Dorsolateral prefrontal cortex (tissue), 120 donors: ENCODE measurements at regions of chr16 and their contacts with region 1.

Region 1: DNA sequence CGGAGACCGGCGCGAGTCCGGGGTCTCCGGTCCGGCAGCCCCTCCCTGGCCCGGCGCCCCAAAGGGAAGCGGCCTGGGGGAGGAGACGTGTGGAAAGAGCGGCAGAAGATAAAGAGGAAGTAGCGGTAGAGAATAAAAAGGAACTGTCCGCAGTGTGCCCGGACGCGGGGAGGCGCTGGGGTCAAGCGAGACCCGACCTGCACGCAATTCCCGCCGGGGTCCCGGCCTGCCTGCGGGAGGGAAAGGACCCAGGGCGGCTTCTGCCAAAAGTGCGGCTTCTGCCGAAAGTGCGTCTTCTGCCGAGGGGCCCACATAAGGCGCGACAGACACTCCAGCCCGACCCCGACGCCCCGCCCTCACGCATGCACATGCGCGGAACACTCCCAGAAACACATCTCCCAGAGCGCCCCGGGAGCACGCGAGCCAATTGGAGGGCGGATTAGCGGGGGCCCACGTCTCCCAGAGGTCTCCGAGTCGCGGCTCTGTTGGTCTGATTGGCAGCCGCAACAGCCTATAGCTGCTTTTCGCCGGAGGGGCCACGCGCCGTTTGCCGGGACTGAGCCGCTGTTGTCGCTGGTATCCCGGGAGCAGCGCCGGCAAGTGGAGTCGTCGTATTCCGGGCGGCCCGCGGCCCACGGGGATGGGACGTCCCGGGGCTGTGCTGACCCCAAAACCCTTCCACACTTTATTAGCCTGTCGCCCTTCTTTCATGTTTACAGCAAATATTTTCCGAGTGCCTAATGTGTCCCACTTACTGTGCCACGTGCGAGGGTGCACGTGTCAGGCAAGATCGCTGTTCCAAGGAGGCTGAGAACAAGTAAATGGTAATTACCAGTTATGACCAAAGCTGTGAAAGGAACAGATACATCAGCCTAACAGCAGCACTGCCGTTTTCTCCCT is 8.0 kb upstream of the MEFV start:
- DNase-seq: peak; percentile 97 to 99 (median 99)
- H3K4me3 ChIP-seq: peak overlapping the region; percentile 57 to 97 (median 88)
- H3K27ac ChIP-seq: peak overlapping the region; percentile 79 to 99 (median 95)
- H3K27me3 ChIP-seq: no peaks in the 10 kb centered on the region
- CTCF ChIP-seq: peak in 49 of 56 donors; percentile 1 to 69 (median 40)

Region 2: DNA sequence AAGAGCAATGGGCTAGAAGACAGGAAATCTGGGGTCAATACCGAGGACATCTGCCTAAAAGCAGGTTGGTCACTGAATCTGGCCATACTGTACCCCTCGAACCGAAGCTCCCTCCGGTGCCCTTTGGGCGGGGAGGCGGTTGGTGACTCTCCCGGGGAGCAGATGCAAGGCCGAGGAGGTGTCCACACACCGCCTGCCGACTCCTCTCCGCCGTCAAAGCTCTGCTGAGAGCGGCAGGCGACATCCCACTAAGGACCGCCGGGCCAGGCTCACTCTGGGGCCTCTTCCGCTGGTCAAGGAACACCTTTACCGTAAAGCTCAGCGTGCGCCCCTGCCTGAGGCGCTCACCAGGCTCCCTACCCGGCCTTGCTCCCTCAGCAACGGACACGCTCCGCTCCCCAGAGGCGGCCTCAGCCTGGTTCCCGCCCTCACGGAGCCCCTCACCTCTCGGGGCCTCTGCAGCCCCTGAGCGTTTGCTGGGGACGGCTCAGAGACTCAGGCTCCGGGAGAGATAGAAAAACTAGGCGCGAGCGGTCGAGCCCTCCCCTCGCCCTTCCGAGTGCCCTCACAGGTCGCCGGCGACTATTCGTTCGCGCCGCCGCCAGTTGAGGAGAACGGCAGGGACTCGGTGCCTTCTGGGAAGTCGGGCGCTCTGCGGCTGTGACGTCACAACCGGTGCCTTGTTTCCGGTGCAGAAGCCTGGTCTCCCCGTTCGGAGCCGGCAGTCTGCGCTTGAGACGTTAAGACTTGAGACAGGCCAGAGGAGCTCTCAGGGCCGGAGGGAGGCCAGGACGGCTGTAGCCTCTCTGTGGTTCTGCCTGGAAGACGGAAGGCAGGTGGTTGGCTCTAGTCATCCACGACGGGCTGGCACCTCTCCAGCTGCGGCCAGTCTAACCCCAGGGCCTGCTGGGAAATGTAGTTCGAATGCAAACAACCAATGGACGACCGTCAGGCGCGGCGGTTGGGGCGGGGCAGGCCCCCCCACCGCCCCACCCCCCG is 29.5 kb before region 1 on chr16 and contains the start of gene ZNF200:
- intact Hi-C with region 1: loop called (anchors 1 kb)
- DNase-seq: peak; percentile 95 to 97 (median 95)
- H3K4me3 ChIP-seq: peak within 1 kb of the TSS; percentile 66 to 100 (median 93)
- H3K27ac ChIP-seq: peak within 1 kb of the TSS; percentile 88 to 100 (median 98)
- H3K27me3 ChIP-seq: no peaks in the 10 kb centered on the region
- CTCF ChIP-seq: peak in 24 of 56 donors; percentile 11 to 51 (median 28)
- total RNA-seq, gene ZNF200: 3.7 to 13.3 (median 8.7) TPM

Region 3: GRCh38 chr16:3282730-3283524 is 18.5 kb after region 1 on chr16 and contains the start of gene ZNF263:
- intact Hi-C with region 1: loop called (anchors 1 kb)
- DNase-seq: peak; percentile 90 to 98 (median 96)
- H3K4me3 ChIP-seq: peak within 1 kb of the TSS; percentile 64 to 100 (median 98)
- H3K27ac ChIP-seq: peak within 1 kb of the TSS; percentile 91 to 100 (median 99)
- H3K27me3 ChIP-seq: peaks cover 0 to 2% (median 0%) of the 10 kb centered on the region in 45 donors
- CTCF ChIP-seq: peak in 26 of 56 donors; percentile 5 to 32 (median 18)
- total RNA-seq, gene ZNF263: 20.2 to 37.2 (median 28.3) TPM

Region 4: GRCh38 chr16:3295783-3296182 is 31.4 kb after region 1 on chr16:
- intact Hi-C with region 1: no loop called
- DNase-seq: no peak
- H3K4me3 ChIP-seq: peak overlapping the region in 4 of 59 donors; percentile 3 to 41 (median 25)
- H3K27ac ChIP-seq: peak overlapping the region in 6 of 59 donors; percentile 1 to 55 (median 36)
- H3K27me3 ChIP-seq: no peaks in the 10 kb centered on the region
- CTCF ChIP-seq: peak in 8 of 56 donors; percentile 12 to 36 (median 22)

Region 5: DNA sequence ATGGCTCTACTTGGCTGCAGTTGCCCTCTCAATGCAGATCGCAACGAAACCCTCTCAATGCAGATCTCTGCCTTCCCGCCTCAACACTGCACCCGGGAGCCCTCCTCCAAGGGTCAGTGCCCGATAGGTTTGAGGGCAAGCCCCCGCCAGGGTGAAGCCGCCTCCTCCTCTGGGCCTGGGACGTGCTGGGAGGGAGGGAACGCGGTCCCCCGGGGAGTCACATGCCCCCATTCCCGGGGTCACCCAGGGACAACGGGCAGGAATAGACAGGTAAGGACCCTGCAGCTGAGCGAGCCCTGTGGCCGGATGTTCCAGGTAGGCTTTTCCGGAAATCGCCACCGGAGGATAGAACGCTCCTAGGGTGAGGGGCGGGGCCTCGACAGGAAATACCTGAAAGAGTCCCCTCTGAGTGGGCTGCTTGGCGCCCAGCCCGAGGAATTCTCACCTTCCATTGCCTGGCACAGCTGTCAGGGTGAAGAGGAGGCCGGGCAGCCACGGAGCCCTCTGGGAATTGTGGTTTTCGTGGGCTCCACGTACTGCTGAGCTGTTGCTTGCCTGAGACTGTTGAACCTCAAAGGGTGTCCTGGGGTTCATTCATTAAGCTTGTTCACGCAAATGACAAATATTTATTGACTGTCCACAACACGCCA is 149.5 kb after region 1 on chr16:
- intact Hi-C with region 1: no loop called
- DNase-seq: no peak
- H3K4me3 ChIP-seq: no peak overlapping the region
- H3K27ac ChIP-seq: no peak overlapping the region
- H3K27me3 ChIP-seq: no peaks in the 10 kb centered on the region
- CTCF ChIP-seq: no peak

Region 6: GRCh38 chr16:3457434-3458252 is 193.3 kb after region 1 on chr16:
- intact Hi-C with region 1: loop called (anchors 2 to 5 kb)
- DNase-seq: peak; percentile 83 to 94 (median 90)
- H3K4me3 ChIP-seq: peak overlapping the region; percentile 62 to 97 (median 88)
- H3K27ac ChIP-seq: peak overlapping the region; percentile 84 to 100 (median 99)
- H3K27me3 ChIP-seq: no peaks in the 10 kb centered on the region
- CTCF ChIP-seq: peak in 53 of 56 donors; percentile 23 to 77 (median 48)

Region 7: DNA sequence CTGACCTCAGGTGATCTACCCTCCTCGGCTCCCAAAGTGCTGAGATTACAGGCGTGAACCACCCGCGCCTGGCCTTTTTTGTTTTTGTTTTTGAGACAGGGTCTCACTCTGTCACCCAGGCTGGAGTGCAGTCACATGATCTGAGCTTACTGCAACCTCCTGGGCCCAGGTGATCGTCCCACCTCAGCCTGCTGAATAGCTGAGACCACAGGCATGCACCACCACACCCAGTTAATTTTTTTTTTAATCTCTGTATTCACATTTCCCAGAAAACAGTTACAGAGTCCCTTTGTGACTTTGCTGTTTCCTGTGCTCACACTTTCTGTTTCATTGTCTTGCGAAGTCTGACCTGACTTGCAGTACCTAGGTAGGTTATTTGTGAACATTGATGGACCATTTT is 239.1 kb after region 1 on chr16:
- intact Hi-C with region 1: loop called (anchors 2 to 5 kb)
- DNase-seq: peak in 1 of 10 donors; percentile 12
- H3K4me3 ChIP-seq: no peak overlapping the region
- H3K27ac ChIP-seq: no peak overlapping the region
- H3K27me3 ChIP-seq: no peaks in the 10 kb centered on the region
- CTCF ChIP-seq: no peak

Region 8: DNA sequence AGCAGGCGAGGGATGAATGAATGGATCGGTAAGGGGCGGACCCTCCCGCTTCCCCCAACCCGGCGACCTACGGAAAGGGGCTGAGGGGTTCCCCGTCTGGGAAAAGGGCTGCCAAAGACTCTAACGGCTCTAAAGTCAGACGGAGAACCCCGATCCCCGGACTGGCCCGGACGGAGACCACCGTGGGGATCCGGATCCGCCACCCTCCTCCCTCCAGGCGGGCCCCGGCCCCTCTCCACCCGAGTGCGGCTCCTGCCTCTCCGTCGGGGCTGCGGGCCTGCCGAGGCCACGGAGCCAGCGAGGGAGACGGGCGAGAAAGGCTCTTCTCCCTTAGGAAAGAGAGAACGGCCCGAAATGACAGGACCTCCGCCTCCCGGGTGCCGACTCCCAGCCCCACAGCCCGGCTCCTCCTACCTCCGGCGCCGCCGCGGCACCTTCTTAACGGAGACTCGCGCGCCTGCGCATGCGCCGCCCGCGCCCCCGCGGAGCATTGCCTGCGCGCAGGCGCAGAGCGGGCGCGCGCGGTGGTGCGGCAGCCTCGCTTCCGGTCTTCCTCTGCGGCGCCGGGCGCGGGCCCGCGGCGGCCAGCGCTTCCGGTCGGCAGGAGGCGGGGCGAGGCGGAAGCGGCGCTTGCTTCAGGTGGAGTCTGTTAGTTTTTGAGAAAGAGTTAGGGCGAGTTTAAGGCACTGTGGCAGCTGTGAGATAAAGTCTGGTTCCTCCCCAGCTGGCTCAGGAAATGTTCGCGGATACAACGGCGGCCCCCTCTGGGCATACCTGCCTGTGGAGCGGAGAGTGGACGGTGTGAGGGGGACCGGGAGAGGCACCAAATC is 347.0 kb after region 1 on chr16 and contains the start of gene SLX4:
- intact Hi-C with region 1: loop called in 1 of 2 experiments (anchors 10 kb)
- DNase-seq: peak; percentile 59 to 90 (median 76)
- H3K4me3 ChIP-seq: peak within 1 kb of the TSS; percentile 75 to 100 (median 97)
- H3K27ac ChIP-seq: peak within 1 kb of the TSS in 57 of 59 donors; percentile 43 to 95 (median 85)
- H3K27me3 ChIP-seq: no peaks in the 10 kb centered on the region
- CTCF ChIP-seq: peak in 29 of 56 donors; percentile 3 to 64 (median 32)
- total RNA-seq, gene SLX4: 7.3 to 19.3 (median 12.6) TPM